IMR-90 (cell line): ENCODE measurements at regions of chr14 and their contacts with region 1.

Region 1: DNA sequence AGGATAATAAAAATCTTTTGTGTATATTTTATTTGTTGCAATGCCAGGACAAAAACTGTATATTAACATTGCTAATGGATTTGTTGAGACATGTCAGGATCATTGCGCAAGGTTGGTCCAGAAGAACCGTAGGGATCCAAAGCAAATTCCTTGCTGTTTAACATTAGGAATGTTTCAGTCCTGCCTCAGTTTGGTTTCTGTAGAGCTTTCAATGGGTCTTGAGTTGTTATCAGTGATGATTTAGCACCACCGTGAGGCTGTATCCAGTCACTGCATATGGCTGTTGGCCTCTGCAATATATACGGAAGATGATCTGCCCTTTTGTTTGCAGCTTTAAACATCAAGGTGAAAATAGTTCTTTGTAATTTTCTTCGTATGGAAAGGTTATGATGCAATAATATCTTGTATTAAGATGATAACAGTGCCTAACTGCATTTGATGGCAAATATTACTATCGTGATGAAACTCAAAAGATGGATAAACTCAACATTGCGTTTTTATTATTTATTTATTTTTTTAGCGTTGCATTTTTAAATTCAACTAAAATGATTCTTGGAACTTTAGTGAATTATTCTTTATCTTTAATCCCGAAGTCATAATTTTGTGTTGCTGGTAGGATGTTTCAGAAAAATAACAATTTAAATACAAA is 231.2 kb downstream of the AKAP6 start:
- DNase-seq: peak; percentile 82
- ATAC-seq: peak; percentile 91
- H3K4me3 ChIP-seq: no peak overlapping the region
- H3K27ac ChIP-seq: no peak overlapping the region
- H3K4me1 ChIP-seq: peaks cover 2% of the 10 kb centered on the region; the same call in 1 of the 2 replicates
- H3K27me3 ChIP-seq: no peaks in the 10 kb centered on the region
- CTCF ChIP-seq: peak; percentile 90
- POLR2A ChIP-seq: no peak
- RAD21 ChIP-seq: peak; percentile 92

Region 2: GRCh38 chr14:31456841-31457664 is 1103.3 kb before region 1 on chr14 and contains the start of gene DTD2:
- CTCF ChIA-PET with region 1: no interaction called
- POLR2A ChIA-PET with region 1: interaction called, 6 read pairs
- dilution Hi-C with region 1: no loop called
- in situ Hi-C with region 1: no loop called
- intact Hi-C with region 1: loop called (anchors 5 kb)
- DNase-seq: peak; percentile 92
- ATAC-seq: peak; percentile 99
- H3K4me3 ChIP-seq: peak within 1 kb of the TSS; percentile 77
- H3K27ac ChIP-seq: peak within 1 kb of the TSS; percentile 97
- H3K4me1 ChIP-seq: peaks cover 2% of the 10 kb centered on the region; the same call in 1 of the 2 replicates
- H3K27me3 ChIP-seq: no peaks in the 10 kb centered on the region
- CTCF ChIP-seq: no peak
- POLR2A ChIP-seq: peak; percentile 81
- RAD21 ChIP-seq: no peak
- total RNA-seq, gene DTD2: 24.9 and 46.1 TPM in 2 replicates

Region 3: GRCh38 chr14:31543969-31544799 is 1016.1 kb before region 1 on chr14:
- CTCF ChIA-PET with region 1: no interaction called
- POLR2A ChIA-PET with region 1: no interaction called
- dilution Hi-C with region 1: no loop called
- in situ Hi-C with region 1: no loop called
- intact Hi-C with region 1: loop called (anchors 1 kb)
- DNase-seq: peak; percentile 23
- ATAC-seq: peak; percentile 77
- H3K4me3 ChIP-seq: no peak overlapping the region
- H3K27ac ChIP-seq: no peak overlapping the region
- H3K4me1 ChIP-seq: no peaks in the 10 kb centered on the region
- H3K27me3 ChIP-seq: peaks cover 3% of the 10 kb centered on the region
- CTCF ChIP-seq: peak; percentile 39
- POLR2A ChIP-seq: no peak
- RAD21 ChIP-seq: peak; percentile 47

Region 4: DNA sequence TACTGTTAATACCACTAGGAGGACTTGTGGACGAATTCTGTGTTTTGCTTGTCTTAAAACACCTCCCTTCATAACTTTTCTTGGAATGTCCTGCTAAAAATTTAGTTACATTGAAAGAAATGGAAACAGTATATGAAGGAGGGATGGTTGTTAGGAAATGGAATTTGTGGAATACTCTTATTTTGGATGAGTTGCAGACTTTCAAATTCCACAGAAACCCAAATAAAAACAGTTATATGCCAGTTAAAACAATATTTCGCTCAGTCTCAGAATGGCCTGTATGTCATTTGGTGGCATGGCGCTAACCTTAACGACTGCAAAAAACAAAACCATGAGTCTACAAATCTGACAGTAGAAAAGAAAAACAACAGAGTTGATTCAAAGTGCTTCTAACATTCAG is 495.4 kb before region 1 on chr14:
- CTCF ChIA-PET with region 1: no interaction called
- POLR2A ChIA-PET with region 1: no interaction called
- dilution Hi-C with region 1: no loop called
- in situ Hi-C with region 1: loop called (anchors 10 kb)
- intact Hi-C with region 1: no loop called
- DNase-seq: no peak
- ATAC-seq: no peak
- H3K4me3 ChIP-seq: no peak overlapping the region
- H3K27ac ChIP-seq: no peak overlapping the region
- H3K4me1 ChIP-seq: no peaks in the 10 kb centered on the region
- H3K27me3 ChIP-seq: peaks cover 5% of the 10 kb centered on the region
- CTCF ChIP-seq: no peak
- POLR2A ChIP-seq: no peak
- RAD21 ChIP-seq: no peak

Region 5: GRCh38 chr14:32202998-32203882 is 357.1 kb before region 1 on chr14 and contains the start of gene RNU6-8:
- CTCF ChIA-PET with region 1: no interaction called
- POLR2A ChIA-PET with region 1: no interaction called
- dilution Hi-C with region 1: no loop called
- in situ Hi-C with region 1: no loop called
- intact Hi-C with region 1: loop called (anchors 2 kb)
- DNase-seq: peak; percentile 79
- ATAC-seq: peak; percentile 91
- H3K4me3 ChIP-seq: peak within 1 kb of the TSS; percentile 67
- H3K27ac ChIP-seq: peak within 1 kb of the TSS; percentile 78
- H3K4me1 ChIP-seq: no peaks in the 10 kb centered on the region
- H3K27me3 ChIP-seq: peaks cover 3% of the 10 kb centered on the region
- CTCF ChIP-seq: no peak
- POLR2A ChIP-seq: no peak
- RAD21 ChIP-seq: no peak
- total RNA-seq, gene RNU6-8: not detected in 2 replicates

Region 6: GRCh38 chr14:32509632-32510187 is 50.6 kb before region 1 on chr14:
- CTCF ChIA-PET with region 1: interaction called, 5 read pairs
- POLR2A ChIA-PET with region 1: no interaction called
- dilution Hi-C with region 1: no loop called
- in situ Hi-C with region 1: no loop called
- intact Hi-C with region 1: loop called (anchors 5 kb)
- DNase-seq: peak; percentile 97
- ATAC-seq: peak; percentile 87
- H3K4me3 ChIP-seq: no peak overlapping the region
- H3K27ac ChIP-seq: peak overlapping the region; percentile 83
- H3K4me1 ChIP-seq: peaks cover 17% of the 10 kb centered on the region
- H3K27me3 ChIP-seq: no peaks in the 10 kb centered on the region
- CTCF ChIP-seq: no peak
- POLR2A ChIP-seq: peak; percentile 40; the same call in 1 of the 2 replicates
- RAD21 ChIP-seq: no peak